Endothelial cell of umbilical vein (primary cell): ENCODE measurements at regions of chr2 and their contacts with region 1.

Region 1: DNA sequence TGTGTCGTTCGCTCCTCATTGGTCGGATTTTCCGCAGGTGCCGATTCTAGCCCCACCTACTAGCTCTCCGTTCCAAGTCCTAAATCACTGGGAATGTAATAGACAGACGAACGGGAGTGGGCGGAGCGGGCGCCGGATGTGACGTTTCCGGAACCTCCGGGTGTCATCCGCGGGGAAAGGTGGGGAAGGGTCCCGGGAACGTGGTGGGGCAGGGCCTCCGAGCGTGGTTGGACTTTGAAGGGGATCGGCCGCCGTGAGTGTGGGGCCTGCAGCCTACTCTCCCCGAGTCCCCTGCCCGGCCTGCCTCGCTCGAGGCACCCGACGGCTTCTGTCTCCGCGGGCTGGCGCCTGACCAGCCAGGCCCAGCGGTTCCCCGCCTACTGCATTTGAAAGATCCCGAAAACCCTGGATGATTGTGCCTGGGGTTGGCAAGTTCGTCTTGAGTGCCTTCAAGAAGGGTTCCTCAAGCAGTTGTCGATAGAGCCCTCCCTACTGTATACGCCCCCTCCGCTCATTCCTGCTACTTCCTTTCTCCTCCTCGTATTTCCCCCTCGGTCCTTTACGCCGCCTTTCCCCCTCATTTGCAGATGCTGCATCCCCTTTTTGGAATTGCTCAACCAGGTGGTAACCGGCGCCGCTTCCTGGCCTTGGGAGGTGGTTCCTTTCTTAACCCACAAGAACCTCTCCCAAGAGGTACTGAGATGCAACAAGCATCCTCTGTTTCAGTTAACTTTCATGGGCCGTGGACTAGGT is at the start of gene STAMBP:
- DNase-seq: peak; percentile 96
- H3K4me3 ChIP-seq: peak within 1 kb of the TSS; percentile 15 to 91 (median 74)
- H3K27ac ChIP-seq: peak within 1 kb of the TSS; percentile 79
- H3K4me1 ChIP-seq: peaks cover 17% of the 10 kb centered on the region
- H3K27me3 ChIP-seq: peaks cover 5 to 6% of the 10 kb centered on the region in 2 experiments
- CTCF ChIP-seq: no peak
- POLR2A ChIP-seq: peak; percentile 76
- total RNA-seq, gene STAMBP: 19.8 and 21.3 TPM in 2 replicates

Region 2: DNA sequence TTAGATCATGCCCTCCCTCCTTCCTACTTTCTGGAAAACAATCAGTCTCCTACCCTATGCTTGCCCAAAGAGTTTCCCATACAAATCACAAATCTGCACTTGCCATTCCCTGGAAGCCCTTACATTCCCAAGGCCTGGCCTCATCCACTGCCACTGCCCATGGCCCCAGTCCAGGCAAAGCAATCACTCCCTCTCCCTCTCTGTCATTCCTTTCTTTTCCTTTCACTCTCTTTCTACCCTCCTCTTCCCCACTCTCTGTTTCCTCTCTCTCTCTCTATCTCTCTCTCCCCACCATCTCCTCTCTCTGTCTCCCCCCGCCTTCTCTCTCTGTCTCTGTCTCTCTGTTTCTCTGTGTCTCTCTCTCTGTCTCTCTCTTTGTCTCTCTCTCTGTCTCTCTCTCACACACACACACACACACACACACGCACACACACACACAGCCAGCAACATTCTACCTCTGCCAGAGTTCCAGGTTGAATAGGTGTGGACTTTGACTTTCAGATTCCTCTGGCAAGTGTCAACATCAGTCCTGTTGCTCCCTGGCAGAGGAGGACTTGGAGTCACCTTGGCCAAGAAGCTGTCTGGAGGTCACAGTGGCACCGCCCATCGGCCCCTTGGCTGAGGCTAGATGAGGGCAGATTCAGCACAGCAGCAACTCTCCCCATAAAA is 143.1 kb before region 1 on chr2:
- CTCF ChIA-PET with region 1: interaction called, 14 read pairs
- POLR2A ChIA-PET with region 1: no interaction called
- dilution Hi-C with region 1: no loop called
- intact Hi-C with region 1: no loop called
- DNase-seq: no peak
- H3K4me3 ChIP-seq: no peak overlapping the region
- H3K27ac ChIP-seq: no peak overlapping the region
- H3K4me1 ChIP-seq: no peaks in the 10 kb centered on the region
- H3K27me3 ChIP-seq: peaks cover 9 to 14% of the 10 kb centered on the region in 2 experiments
- CTCF ChIP-seq: no peak
- POLR2A ChIP-seq: no peak

Region 3: DNA sequence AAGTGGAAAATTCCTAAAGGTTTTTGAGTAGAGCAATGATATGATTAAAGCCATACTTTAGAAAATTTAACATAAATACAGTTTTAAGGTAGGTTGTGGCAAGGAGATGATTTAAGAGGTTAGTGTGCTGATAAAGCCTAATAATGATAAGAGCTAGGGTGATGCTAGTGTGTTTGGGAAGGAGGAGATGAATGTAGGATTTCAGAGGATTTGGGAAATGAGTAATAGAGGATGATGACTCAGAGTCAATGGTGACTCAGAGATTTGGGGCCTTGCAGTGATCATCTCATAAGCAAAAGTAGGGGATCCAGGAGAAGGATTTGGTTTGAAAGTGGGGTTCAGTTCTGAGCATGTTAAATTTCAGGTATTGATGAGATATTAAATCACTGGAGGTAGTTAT is 23.0 kb after region 1 on chr2:
- CTCF ChIA-PET with region 1: no interaction called
- POLR2A ChIA-PET with region 1: no interaction called
- dilution Hi-C with region 1: no loop called
- intact Hi-C with region 1: loop called (anchors 1 kb)
- DNase-seq: peak; percentile 75
- H3K4me3 ChIP-seq: no peak overlapping the region
- H3K27ac ChIP-seq: peak overlapping the region; percentile 24
- H3K4me1 ChIP-seq: peaks cover 9% of the 10 kb centered on the region
- H3K27me3 ChIP-seq: no peaks in the 10 kb centered on the region
- CTCF ChIP-seq: no peak
- POLR2A ChIP-seq: no peak

Region 4: GRCh38 chr2:73985308-73986084 is 156.5 kb after region 1 on chr2:
- CTCF ChIA-PET with region 1: interaction called, 25 read pairs
- POLR2A ChIA-PET with region 1: no interaction called
- dilution Hi-C with region 1: no loop called
- intact Hi-C with region 1: loop called (anchors 1 kb)
- DNase-seq: no peak
- H3K4me3 ChIP-seq: peak overlapping the region; percentile 44 to 69 (median 66)
- H3K27ac ChIP-seq: peak overlapping the region; percentile 49
- H3K4me1 ChIP-seq: peaks cover 39% of the 10 kb centered on the region
- H3K27me3 ChIP-seq: no peaks in the 10 kb centered on the region
- CTCF ChIP-seq: no peak
- POLR2A ChIP-seq: no peak

Region 5: DNA sequence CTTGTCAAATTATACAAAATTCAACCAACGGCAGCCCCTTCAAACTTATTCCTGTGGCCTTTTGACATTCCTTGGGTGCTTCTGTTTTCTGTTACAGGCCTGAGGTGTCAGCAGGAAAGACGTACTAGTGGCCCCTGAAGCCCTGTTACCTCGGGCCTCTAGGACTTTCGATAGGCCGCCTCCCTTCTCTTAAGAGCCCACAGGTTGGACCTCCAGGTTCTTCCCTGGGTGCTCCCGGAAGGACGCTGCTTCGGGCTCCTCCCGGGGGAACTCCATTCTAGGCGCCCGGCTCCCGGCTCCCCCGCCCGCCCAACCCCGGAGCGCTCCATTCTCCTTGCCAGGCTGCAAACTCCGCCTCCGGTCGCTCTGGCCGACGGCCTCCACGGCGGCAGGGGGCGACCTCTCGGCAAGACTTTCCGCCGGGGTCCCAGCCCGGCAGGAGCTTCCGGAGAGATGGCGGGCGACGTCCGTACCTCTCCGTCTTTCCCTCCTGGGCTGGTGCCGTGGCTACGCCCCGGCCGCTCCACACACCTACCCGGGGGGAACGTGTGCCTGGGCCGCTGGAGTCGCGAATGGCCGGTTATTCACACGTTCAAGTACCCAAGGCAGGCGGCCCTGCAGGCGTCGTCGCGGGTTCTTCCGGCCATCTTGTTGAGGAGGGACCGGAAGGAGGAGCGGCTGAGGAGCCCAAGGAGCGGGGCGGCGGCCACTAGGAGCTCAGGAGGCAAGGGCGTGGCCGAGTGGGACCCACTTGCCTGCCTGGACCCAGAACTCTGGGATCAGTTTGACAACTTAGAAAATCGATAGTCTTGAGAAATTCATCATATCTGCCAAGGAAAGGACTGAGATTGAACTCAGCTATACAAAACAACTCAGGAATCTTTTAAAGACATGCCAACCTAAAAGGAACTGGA is 291.2 kb after region 1 on chr2:
- CTCF ChIA-PET with region 1: interaction called, 6 read pairs
- POLR2A ChIA-PET with region 1: interaction called, 5 read pairs
- dilution Hi-C with region 1: no loop called
- intact Hi-C with region 1: loop called (anchors 1 kb)
- DNase-seq: peak; percentile 68
- H3K4me3 ChIP-seq: peak overlapping the region; percentile 65 to 73 (median 66)
- H3K27ac ChIP-seq: no peak overlapping the region
- H3K4me1 ChIP-seq: peaks cover 9% of the 10 kb centered on the region
- H3K27me3 ChIP-seq: peaks cover 0 to 2% of the 10 kb centered on the region in 2 experiments
- CTCF ChIP-seq: peak; percentile 29 to 60
- POLR2A ChIP-seq: no peak

Region 6: GRCh38 chr2:74198461-74199274 is 369.7 kb after region 1 on chr2 and contains the start of gene MTHFD2:
- CTCF ChIA-PET with region 1: interaction called, 5 read pairs
- POLR2A ChIA-PET with region 1: interaction called, 3 read pairs
- dilution Hi-C with region 1: no loop called
- intact Hi-C with region 1: loop called (anchors 1 kb)
- DNase-seq: peak; percentile 97
- H3K4me3 ChIP-seq: peak within 1 kb of the TSS; percentile 76 to 90 (median 80)
- H3K27ac ChIP-seq: peak within 1 kb of the TSS; percentile 65
- H3K4me1 ChIP-seq: peaks cover 17% of the 10 kb centered on the region
- H3K27me3 ChIP-seq: no peaks in the 10 kb centered on the region
- CTCF ChIP-seq: peak; percentile 69 to 95
- POLR2A ChIP-seq: peak; percentile 91
- total RNA-seq, gene MTHFD2: 74.9 and 83.2 TPM in 2 replicates

Region 7: DNA sequence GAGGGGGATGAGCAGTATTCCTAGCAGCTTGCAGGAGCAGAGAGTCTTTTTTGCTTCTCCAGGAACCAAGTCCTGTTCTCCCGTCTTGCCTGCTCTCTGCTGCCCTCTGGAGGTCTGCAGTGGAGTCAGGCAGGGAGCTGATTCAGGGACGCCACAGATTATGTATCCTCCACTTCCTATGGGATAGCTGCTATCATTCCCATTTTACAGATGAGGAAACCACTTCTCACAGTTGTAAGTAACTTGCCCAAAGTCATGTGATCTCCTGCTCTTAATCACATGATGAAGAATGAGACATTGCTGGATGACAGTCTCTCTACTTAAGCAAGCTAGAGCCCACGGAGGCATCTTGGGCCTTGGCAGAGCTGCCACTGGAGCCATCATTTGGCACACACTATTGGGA is 505.9 kb after region 1 on chr2:
- CTCF ChIA-PET with region 1: interaction called, 100 read pairs
- POLR2A ChIA-PET with region 1: no interaction called
- dilution Hi-C with region 1: no loop called
- intact Hi-C with region 1: loop called (anchors 1 kb)
- DNase-seq: peak; percentile 70
- H3K4me3 ChIP-seq: no peak overlapping the region
- H3K27ac ChIP-seq: no peak overlapping the region
- H3K4me1 ChIP-seq: no peaks in the 10 kb centered on the region
- H3K27me3 ChIP-seq: peaks cover 0 to 2% of the 10 kb centered on the region in 2 experiments
- CTCF ChIP-seq: peak; percentile 88 to 95
- POLR2A ChIP-seq: no peak